PC-9 (cell line): ENCODE measurements at regions of chr1 and their contacts with region 1.

Region 1: GRCh38 chr1:218945050-218945449 is 228.6 kb upstream of the LYPLAL1 start:
- DNase-seq: no peak
- H3K4me3 ChIP-seq: no peak overlapping the region
- H3K27ac ChIP-seq: no peak overlapping the region
- H3K4me1 ChIP-seq: 0 out of 2 replicates have a peak, but pooled peaks cover 8% of the 10 kb centered on the region
- H3K27me3 ChIP-seq: no peaks in the 10 kb centered on the region
- CTCF ChIP-seq: no peak

Region 2: DNA sequence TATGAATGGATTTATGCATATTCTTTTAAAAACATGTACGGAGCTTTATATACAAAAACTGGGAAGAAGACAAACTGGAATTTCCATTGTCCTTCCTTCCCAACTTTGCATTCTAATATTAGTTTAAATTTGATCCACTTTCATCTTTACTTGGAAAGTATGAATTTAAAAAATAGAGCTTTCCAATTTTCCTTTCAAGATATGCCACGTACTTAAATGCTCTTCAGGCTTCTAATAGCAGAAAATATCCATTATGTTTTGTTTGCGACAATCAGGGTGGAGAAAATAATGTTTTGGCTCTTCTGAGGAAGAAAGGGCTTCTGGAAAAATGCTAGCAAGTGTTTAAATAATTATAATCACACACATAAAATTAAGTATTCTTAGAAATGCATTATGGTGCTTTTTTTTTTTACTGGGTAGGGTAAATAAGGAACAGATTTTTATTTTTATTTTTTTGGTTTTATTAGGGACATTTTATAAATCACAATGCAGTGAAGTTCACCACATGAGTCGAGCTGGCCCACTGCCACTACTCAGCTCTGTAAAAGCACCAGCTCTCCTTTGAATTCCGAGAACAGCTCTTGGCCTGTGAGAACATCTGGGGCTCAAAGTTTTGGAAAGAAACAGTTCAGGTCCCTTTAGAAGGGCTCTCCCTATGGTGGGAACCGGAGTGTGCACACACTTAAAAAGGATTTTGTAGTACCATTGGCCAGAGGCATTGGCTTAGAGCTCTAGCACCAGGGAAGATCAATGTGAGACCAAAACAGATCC is 58.8 kb before region 1 on chr1:
- CTCF ChIA-PET with region 1: no interaction called
- POLR2A ChIA-PET with region 1: no interaction called
- intact Hi-C with region 1: no loop called
- DNase-seq: no peak
- H3K4me3 ChIP-seq: no peak overlapping the region
- H3K27ac ChIP-seq: no peak overlapping the region
- H3K4me1 ChIP-seq: no peaks in the 10 kb centered on the region; the same call in 1 of the 2 replicates
- H3K27me3 ChIP-seq: no peaks in the 10 kb centered on the region
- CTCF ChIP-seq: no peak

Region 3: GRCh38 chr1:218983887-218984286 is 38.8 kb after region 1 on chr1:
- CTCF ChIA-PET with region 1: no interaction called
- POLR2A ChIA-PET with region 1: no interaction called
- intact Hi-C with region 1: no loop called
- DNase-seq: no peak
- H3K4me3 ChIP-seq: no peak overlapping the region
- H3K27ac ChIP-seq: no peak overlapping the region
- H3K4me1 ChIP-seq: 0 out of 2 replicates have a peak, but pooled peaks cover 7% of the 10 kb centered on the region
- H3K27me3 ChIP-seq: no peaks in the 10 kb centered on the region
- CTCF ChIP-seq: no peak

Region 4: DNA sequence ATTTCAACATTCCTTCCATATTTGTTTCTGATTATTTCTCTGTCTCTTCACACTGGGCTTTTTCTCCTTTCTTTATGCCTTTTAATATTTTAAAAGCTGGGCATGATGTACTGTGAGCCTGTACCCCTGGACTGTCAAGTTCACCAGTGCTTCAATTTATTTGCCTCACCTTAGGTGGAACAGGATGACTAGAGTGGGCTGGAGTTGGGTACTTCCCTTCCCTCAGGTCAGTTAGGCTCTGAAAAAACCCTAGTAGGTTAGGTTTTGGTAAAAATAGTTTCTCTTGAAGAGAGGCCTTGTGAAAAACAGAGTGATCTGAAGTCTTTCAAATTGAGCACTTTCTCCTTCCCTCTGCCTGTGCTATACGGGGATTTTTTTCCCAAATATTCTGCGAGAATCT is 65.7 kb after region 1 on chr1:
- CTCF ChIA-PET with region 1: no interaction called
- POLR2A ChIA-PET with region 1: no interaction called
- intact Hi-C with region 1: loop called (anchors 1 kb)
- DNase-seq: no peak
- H3K4me3 ChIP-seq: no peak overlapping the region
- H3K27ac ChIP-seq: no peak overlapping the region
- H3K4me1 ChIP-seq: no peaks in the 10 kb centered on the region
- H3K27me3 ChIP-seq: no peaks in the 10 kb centered on the region
- CTCF ChIP-seq: no peak